Heart right ventricle (tissue), 16 donors: ENCODE measurements at regions of chr15 and their contacts with region 1.

Region 1: GRCh38 chr15:31004220-31004733 is 12.8 kb upstream of the MTMR10 start:
- DNase-seq: peak; percentile 33 to 80
- ATAC-seq: peak; percentile 77 to 96 (median 88)
- H3K4me3 ChIP-seq: no peak overlapping the region
- H3K27ac ChIP-seq: peak overlapping the region in 9 of 10 donors; percentile 22 to 76 (median 63)
- H3K4me1 ChIP-seq: peaks cover 0 to 25% (median 16%) of the 10 kb centered on the region in 9 donors
- H3K27me3 ChIP-seq: peaks cover 0 to 13% (median 5%) of the 10 kb centered on the region in 7 donors
- CTCF ChIP-seq: no peak

Region 2: GRCh38 chr15:31031471-31032067 is 27.3 kb after region 1 on chr15:
- intact Hi-C with region 1: loop called in 1 of 10 experiments (anchors 2 kb)
- DNase-seq: no peak
- ATAC-seq: peak in 6 of 8 donors; percentile 45 to 88 (median 84)
- H3K4me3 ChIP-seq: no peak overlapping the region
- H3K27ac ChIP-seq: peak overlapping the region in 1 of 10 donors; percentile 39
- H3K4me1 ChIP-seq: peaks cover 0 to 22% (median 16%) of the 10 kb centered on the region in 9 donors
- H3K27me3 ChIP-seq: peaks cover 0 to 8% (median 0%) of the 10 kb centered on the region in 7 donors
- CTCF ChIP-seq: no peak

Region 3: GRCh38 chr15:31062310-31062847 is 58.1 kb after region 1 on chr15:
- intact Hi-C with region 1: loop called in 3 of 10 experiments (anchors 2 to 10 kb)
- DNase-seq: no peak
- ATAC-seq: peak in 3 of 8 donors; percentile 37 to 58 (median 44)
- H3K4me3 ChIP-seq: no peak overlapping the region
- H3K27ac ChIP-seq: peak overlapping the region in 9 of 10 donors; percentile 11 to 83 (median 63)
- H3K4me1 ChIP-seq: peaks cover 0 to 25% (median 0%) of the 10 kb centered on the region in 9 donors
- H3K27me3 ChIP-seq: peaks cover 0 to 4% (median 0%) of the 10 kb centered on the region in 7 donors
- CTCF ChIP-seq: no peak

Region 4: GRCh38 chr15:31069360-31070000 is 65.2 kb after region 1 on chr15:
- intact Hi-C with region 1: loop called in 2 of 10 experiments (anchors 5 to 10 kb)
- DNase-seq: no peak
- ATAC-seq: peak in 1 of 8 donors; percentile 42
- H3K4me3 ChIP-seq: no peak overlapping the region
- H3K27ac ChIP-seq: no peak overlapping the region
- H3K4me1 ChIP-seq: no peaks in the 10 kb centered on the region
- H3K27me3 ChIP-seq: no peaks in the 10 kb centered on the region
- CTCF ChIP-seq: no peak